Sciatic nerve (tissue), 2 donors: ENCODE measurements at regions of chr17 and their contacts with region 1.

Region 1: DNA sequence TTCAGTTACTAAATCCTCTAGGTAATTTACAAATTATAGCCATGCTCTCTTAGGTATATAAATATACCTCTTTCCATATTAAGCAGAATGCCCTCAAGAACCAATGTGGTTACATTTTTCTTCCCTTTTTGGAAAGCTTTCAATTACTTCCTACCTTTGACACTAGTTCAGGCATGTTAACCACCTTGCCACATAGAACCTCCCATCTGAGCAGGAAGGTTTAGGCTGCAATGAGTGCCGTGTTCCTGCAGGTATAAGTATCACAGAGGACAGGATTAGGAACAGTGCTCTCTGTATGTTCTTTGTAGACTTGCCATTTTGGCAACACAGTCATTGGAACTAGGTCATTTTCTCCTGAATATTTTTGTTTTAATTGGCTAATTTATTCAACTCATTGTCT is 20.1 kb downstream of the KRT25 start:
- DNase-seq: no peak
- ATAC-seq: no peak

Region 2: GRCh38 chr17:40782450-40782849 is 47.4 kb after region 1 on chr17 and contains the start of gene KRT27:
- intact Hi-C with region 1: loop called (anchors 2 kb)
- DNase-seq: no peak
- ATAC-seq: no peak
- total RNA-seq, gene KRT27: 1.2 TPM